Astrocyte of the cerebellum (primary cell): ENCODE measurements at regions of chr22 and their contacts with region 1.

Region 1: DNA sequence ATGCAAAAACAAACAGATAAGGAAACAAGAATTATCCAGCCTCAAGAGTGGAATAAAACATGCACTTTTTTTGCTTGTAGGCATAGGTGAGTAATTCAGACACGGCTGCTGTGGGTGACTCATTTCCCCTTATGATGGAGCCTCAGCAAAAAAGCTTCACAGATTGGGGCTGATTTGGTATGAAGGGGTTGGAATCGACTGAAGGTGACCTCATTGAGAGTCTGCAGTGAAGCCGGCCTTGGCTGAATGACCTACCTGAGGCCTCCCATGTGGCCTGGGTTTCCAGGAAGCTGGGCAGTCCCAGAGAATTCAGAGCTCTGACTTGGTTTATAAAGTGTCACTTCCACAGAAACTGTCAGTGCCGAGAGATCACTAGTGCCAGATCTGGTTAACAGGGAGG is 34.2 kb upstream of the VPREB1 start:
- DNase-seq: peak; percentile 11
- H3K4me3 ChIP-seq: no peak overlapping the region
- CTCF ChIP-seq: no peak

Region 2: DNA sequence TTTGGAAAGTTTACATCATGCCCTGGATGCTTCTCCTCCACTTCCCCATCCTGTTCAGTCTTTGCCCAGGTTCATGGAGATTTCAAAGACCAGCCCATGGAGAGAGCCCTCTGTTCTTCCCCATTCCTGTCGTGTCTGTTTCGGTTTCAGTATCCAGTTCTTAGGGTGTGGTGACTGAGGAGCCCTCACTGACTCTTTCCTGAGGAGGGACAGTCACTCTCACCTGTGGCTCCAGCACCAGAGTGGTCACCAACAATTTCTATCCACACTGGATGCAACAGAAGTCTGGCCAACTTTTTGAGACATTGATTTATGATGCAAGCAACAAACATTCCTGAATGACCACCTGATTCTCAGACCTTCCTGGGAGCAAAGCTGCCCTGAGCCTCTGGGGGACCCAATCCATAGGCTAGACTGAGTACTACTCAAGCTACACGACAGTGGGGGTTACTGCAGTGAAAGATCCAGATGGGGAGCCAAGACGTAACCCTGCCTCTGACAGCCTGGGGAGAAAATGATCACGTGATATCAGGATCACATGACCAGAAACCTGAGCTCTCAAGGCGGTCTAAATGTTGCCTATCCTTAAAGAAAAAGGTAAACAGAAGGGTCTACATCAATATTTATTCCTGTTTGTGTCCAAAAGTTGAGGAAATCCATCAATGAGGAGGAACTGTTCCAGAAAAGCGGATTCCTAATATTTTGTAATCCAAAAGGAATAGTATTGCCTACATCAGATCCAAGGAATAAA is 42.0 kb before region 1 on chr22:
- in situ Hi-C with region 1: no loop called
- DNase-seq: peak; percentile 9
- H3K4me3 ChIP-seq: no peak overlapping the region
- CTCF ChIP-seq: no peak

Region 3: GRCh38 chr22:22316589-22316988 is 106.2 kb after region 1 on chr22:
- in situ Hi-C with region 1: loop called (anchors 5 kb)
- DNase-seq: no peak
- H3K4me3 ChIP-seq: no peak overlapping the region
- CTCF ChIP-seq: no peak